ENCODE measurements at regions of chr11 and their contacts with region 1.

Region 1: GRCh38 chr11:126440792-126441514 is 85.5 kb downstream of the ST3GAL4 start:
- DNase-seq: peak; percentile 74 to 85 (median 77)
- ATAC-seq: peak; percentile 45 to 74 (median 66)
- H3K4me3 ChIP-seq: no peak overlapping the region
- H3K27ac ChIP-seq: no peak overlapping the region
- H3K4me1 ChIP-seq: peaks cover 0 to 31% (median 8%) of the 10 kb centered on the region in 12 donors
- H3K27me3 ChIP-seq: no peaks in the 10 kb centered on the region
- CTCF ChIP-seq: peak; percentile 88 to 98 (median 96)
- POLR2A ChIP-seq: no peak

Region 2: GRCh38 chr11:126480410-126481302 is 39.7 kb after region 1 on chr11:
- intact Hi-C with region 1: loop called (anchors 1 to 5 kb)
- DNase-seq: peak; percentile 80 to 89 (median 82)
- ATAC-seq: peak; percentile 69 to 89 (median 87)
- H3K4me3 ChIP-seq: peak overlapping the region in 5 of 12 donors; percentile 9 to 37 (median 15)
- H3K27ac ChIP-seq: peak overlapping the region in 9 of 12 donors; percentile 12 to 78 (median 56)
- H3K4me1 ChIP-seq: peaks cover 0 to 12% (median 1%) of the 10 kb centered on the region in 12 donors
- H3K27me3 ChIP-seq: no peaks in the 10 kb centered on the region
- CTCF ChIP-seq: peak; percentile 89 to 98 (median 93)
- POLR2A ChIP-seq: no peak

Region 3: GRCh38 chr11:126978911-126979310 is 538.0 kb after region 1 on chr11:
- intact Hi-C with region 1: loop called in 2 of 10 experiments (anchors 5 to 10 kb)
- DNase-seq: no peak
- ATAC-seq: no peak
- H3K4me3 ChIP-seq: no peak overlapping the region
- H3K27ac ChIP-seq: no peak overlapping the region
- H3K4me1 ChIP-seq: no peaks in the 10 kb centered on the region
- H3K27me3 ChIP-seq: peaks cover 0 to 72% (median 5%) of the 10 kb centered on the region in 9 donors
- CTCF ChIP-seq: no peak
- POLR2A ChIP-seq: no peak

Region 4: GRCh38 chr11:126989942-126990715 is 549.2 kb after region 1 on chr11:
- intact Hi-C with region 1: loop called (anchors 2 to 10 kb)
- DNase-seq: peak; percentile 41 to 76 (median 70)
- ATAC-seq: peak; percentile 78 to 85 (median 84)
- H3K4me3 ChIP-seq: no peak overlapping the region
- H3K27ac ChIP-seq: no peak overlapping the region
- H3K4me1 ChIP-seq: peaks cover 0 to 4% (median 0%) of the 10 kb centered on the region in 12 donors
- H3K27me3 ChIP-seq: peaks cover 0 to 31% (median 7%) of the 10 kb centered on the region in 9 donors
- CTCF ChIP-seq: peak; percentile 79 to 93 (median 86)
- POLR2A ChIP-seq: no peak

Region 5: GRCh38 chr11:127334466-127334865 is 893.5 kb after region 1 on chr11:
- intact Hi-C with region 1: loop called in 1 of 10 experiments (anchors 5 kb)
- DNase-seq: no peak
- ATAC-seq: no peak
- H3K4me3 ChIP-seq: no peak overlapping the region
- H3K27ac ChIP-seq: no peak overlapping the region
- H3K4me1 ChIP-seq: no peaks in the 10 kb centered on the region
- H3K27me3 ChIP-seq: no peaks in the 10 kb centered on the region
- CTCF ChIP-seq: no peak
- POLR2A ChIP-seq: no peak

Region 6: DNA sequence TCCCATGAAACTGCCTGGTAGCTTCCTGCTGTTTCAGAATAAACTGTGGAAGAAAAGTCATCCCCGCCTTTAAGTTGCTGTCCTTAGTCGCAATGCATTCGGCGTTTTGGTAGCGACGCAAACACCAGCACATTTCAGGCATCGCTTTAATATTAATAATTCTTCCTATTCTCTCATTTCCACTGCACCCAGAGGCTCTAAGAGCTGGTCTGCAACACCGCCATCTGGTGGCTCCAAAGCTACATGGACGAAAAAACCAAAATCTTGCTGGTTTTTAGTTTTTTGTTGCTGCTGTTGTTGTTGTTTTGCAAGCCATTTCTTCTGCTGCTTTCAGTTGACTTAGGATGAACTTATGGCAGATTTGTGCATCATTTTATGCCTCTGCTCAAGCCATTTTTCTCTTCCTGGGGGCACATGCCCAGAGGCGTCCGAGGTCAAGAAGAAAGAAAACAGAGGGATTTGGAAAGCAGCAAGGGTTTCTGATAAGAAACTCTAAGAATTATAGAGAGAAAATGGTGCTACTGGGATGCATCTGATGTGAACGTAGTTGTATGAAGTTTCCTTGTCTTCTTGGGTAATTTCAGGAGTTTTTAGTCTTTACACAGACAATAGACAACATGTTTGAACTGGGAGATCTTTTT is 905.0 kb after region 1 on chr11:
- intact Hi-C with region 1: loop called in 9 of 10 experiments (anchors 2 to 5 kb)
- DNase-seq: peak in 3 of 5 donors; percentile 7 to 32 (median 19)
- ATAC-seq: no peak
- H3K4me3 ChIP-seq: peak overlapping the region in 1 of 12 donors; percentile 1
- H3K27ac ChIP-seq: no peak overlapping the region
- H3K4me1 ChIP-seq: no peaks in the 10 kb centered on the region
- H3K27me3 ChIP-seq: peaks cover 0 to 4% (median 0%) of the 10 kb centered on the region in 9 donors
- CTCF ChIP-seq: peak; percentile 55 to 82 (median 74)
- POLR2A ChIP-seq: no peak